ENCODE measurements at regions of chr14 and their contacts with region 1.

Region 1: GRCh38 chr14:50532502-50533240 is at the start of gene MAP4K5:
- DNase-seq: peak; percentile 92 to 94
- H3K4me3 ChIP-seq: peak within 1 kb of the TSS; percentile 58 to 98 (median 92)
- H3K27ac ChIP-seq: peak within 1 kb of the TSS; percentile 93 to 98 (median 97)
- H3K4me1 ChIP-seq: peaks cover 22 to 31% of the 10 kb centered on the region in 2 donors
- H3K27me3 ChIP-seq: no peaks in the 10 kb centered on the region
- CTCF ChIP-seq: peak; percentile 62 to 99 (median 88)
- POLR2A ChIP-seq: peak in 1 of 2 donors; percentile 92
- total RNA-seq, gene MAP4K5: 139 to 259 (median 153) TPM

Region 2: GRCh38 chr14:49867831-49868723 is 664.6 kb before region 1 on chr14:
- intact Hi-C with region 1: loop called (anchors 10 kb)
- DNase-seq: peak; percentile 95 to 96
- H3K4me3 ChIP-seq: peak overlapping the region in 2 of 3 donors; percentile 16 to 56
- H3K27ac ChIP-seq: peak overlapping the region; percentile 69 to 91 (median 88)
- H3K4me1 ChIP-seq: peaks cover 4 to 5% of the 10 kb centered on the region in 2 donors
- H3K27me3 ChIP-seq: no peaks in the 10 kb centered on the region
- CTCF ChIP-seq: no peak
- POLR2A ChIP-seq: peak in 1 of 2 donors; percentile 86

Region 3: GRCh38 chr14:50123062-50123461 is 409.6 kb before region 1 on chr14:
- intact Hi-C with region 1: loop called (anchors 10 kb)
- DNase-seq: no peak
- H3K4me3 ChIP-seq: no peak overlapping the region
- H3K27ac ChIP-seq: peak overlapping the region; percentile 30 to 69 (median 54)
- H3K4me1 ChIP-seq: peaks cover 6% of the 10 kb centered on the region in 2 donors
- H3K27me3 ChIP-seq: no peaks in the 10 kb centered on the region
- CTCF ChIP-seq: no peak
- POLR2A ChIP-seq: no peak

Region 4: DNA sequence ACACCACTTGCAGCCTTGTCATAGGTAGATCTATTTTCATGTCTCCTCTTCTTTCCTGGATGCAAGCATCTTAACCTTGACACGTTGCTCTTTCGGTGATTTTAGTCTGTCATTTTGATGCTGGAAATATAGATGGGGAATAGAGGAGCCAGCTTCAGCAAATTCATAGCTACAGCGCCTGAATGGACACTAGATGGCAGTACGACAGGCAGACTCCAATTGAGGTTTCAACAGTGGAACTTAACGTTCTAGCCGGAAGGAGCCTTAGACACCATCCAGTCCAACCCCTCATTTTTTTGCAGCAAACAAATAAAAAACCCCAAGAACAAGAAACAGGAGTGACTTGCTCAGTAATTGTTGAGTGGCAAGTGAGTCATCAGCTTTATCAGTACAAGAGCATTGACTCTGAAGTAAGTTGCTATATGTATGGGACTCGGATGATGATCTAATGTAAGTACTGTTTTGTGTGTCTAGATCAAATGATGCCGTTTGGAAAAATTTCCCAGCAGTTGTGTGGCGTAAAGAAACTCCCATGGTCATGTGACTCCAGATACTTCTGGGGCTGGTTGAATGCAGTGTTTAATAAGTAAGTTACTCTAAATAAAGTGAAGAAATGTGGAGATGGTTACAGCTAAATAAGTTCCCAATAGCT is 211.5 kb before region 1 on chr14:
- intact Hi-C with region 1: loop called (anchors 5 kb)
- DNase-seq: peak; percentile 64 to 65
- H3K4me3 ChIP-seq: no peak overlapping the region
- H3K27ac ChIP-seq: peak overlapping the region; percentile 7 to 82 (median 69)
- H3K4me1 ChIP-seq: peaks cover 5 to 8% of the 10 kb centered on the region in 2 donors
- H3K27me3 ChIP-seq: no peaks in the 10 kb centered on the region
- CTCF ChIP-seq: peak; percentile 70 to 86 (median 84)
- POLR2A ChIP-seq: peak in 1 of 2 donors; percentile 10

Measured in thyroid gland (tissue), 4 donors.